Brain microvascular endothelial cell (primary cell): ENCODE measurements at regions of chr9 and their contacts with region 1.

Region 1: GRCh38 chr9:5437254-5438216 is at the start of gene PLGRKT:
- DNase-seq: peak; percentile 86
- H3K4me3 ChIP-seq: peak within 1 kb of the TSS; percentile 80
- H3K27ac ChIP-seq: peak within 1 kb of the TSS; percentile 79
- H3K27me3 ChIP-seq: no peaks in the 10 kb centered on the region
- CTCF ChIP-seq: peak; percentile 16

Region 2: DNA sequence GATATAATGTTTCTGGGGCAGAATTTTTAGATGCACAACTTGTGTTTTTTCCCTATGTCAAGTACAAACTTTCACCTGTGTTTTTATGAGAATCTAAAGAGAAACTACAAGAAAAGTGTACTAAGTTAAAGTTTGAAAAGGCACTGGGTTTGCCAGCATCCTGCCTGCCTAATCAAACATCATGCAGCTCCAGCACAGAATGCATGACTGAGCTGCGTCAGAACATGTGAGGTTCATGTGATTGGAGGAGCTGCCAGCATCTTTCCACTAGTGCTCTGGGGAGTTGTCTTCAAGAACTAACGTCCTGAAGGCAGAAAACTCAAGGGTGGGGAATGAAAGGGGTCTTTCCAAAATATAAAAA is 145.3 kb after region 1 on chr9:
- in situ Hi-C with region 1: loop called (anchors 25 kb)
- DNase-seq: peak; percentile 44
- H3K4me3 ChIP-seq: no peak overlapping the region
- H3K27ac ChIP-seq: peak overlapping the region; percentile 22
- H3K27me3 ChIP-seq: no peaks in the 10 kb centered on the region
- CTCF ChIP-seq: no peak

Region 3: GRCh38 chr9:5628530-5629311 is 191.2 kb after region 1 on chr9 and contains the start of gene RIC1:
- in situ Hi-C with region 1: no loop called
- DNase-seq: peak; percentile 88
- H3K4me3 ChIP-seq: peak within 1 kb of the TSS; percentile 88
- H3K27ac ChIP-seq: peak within 1 kb of the TSS; percentile 75
- H3K27me3 ChIP-seq: no peaks in the 10 kb centered on the region
- CTCF ChIP-seq: no peak